ENCODE measurements at regions of chr2 and their contacts with region 1.

Region 1: GRCh38 chr2:170928824-170929685 is at the start of gene GORASP2:
- DNase-seq: peak; percentile 98 to 99 (median 99)
- H3K4me3 ChIP-seq: peak within 1 kb of the TSS; percentile 70 to 82
- H3K4me3 Mint-ChIP-seq: peak within 1 kb of the TSS; percentile 93 to 99 (median 96)
- H3K27ac ChIP-seq: peak within 1 kb of the TSS; percentile 89
- H3K27ac Mint-ChIP-seq: peak within 1 kb of the TSS; percentile 94 to 98 (median 97)
- H3K4me1 ChIP-seq: peaks cover 43% of the 10 kb centered on the region
- H3K4me1 Mint-ChIP-seq: peaks cover 24 to 48% (median 38%) of the 10 kb centered on the region in 4 donors
- H3K27me3 ChIP-seq: no peaks in the 10 kb centered on the region
- H3K27me3 Mint-ChIP-seq: no peaks in the 10 kb centered on the region
- total RNA-seq, gene GORASP2: 82.4 to 83.2 TPM

Region 2: GRCh38 chr2:169694113-169694903 is 1234.7 kb before region 1 on chr2 and contains the starts of genes CFAP210 and PHOSPHO2:
- CTCF ChIA-PET with region 1: no interaction called
- POLR2A ChIA-PET with region 1: no interaction called
- intact Hi-C with region 1: loop called (anchors 10 kb)
- DNase-seq: peak; percentile 98 to 99 (median 99)
- H3K4me3 ChIP-seq: peak within 1 kb of the TSS; percentile 37 to 69
- H3K4me3 Mint-ChIP-seq: peak within 1 kb of the TSS; percentile 88 to 96 (median 92)
- H3K27ac ChIP-seq: peak within 1 kb of the TSS; percentile 72
- H3K27ac Mint-ChIP-seq: peak within 1 kb of the TSS; percentile 93 to 100 (median 99)
- H3K4me1 ChIP-seq: peaks cover 15% of the 10 kb centered on the region
- H3K4me1 Mint-ChIP-seq: peaks cover 12 to 21% (median 16%) of the 10 kb centered on the region in 4 donors
- H3K27me3 ChIP-seq: no peaks in the 10 kb centered on the region
- H3K27me3 Mint-ChIP-seq: peaks cover 5 to 8% of the 10 kb centered on the region in 2 donors
- total RNA-seq, gene CFAP210: not detected
- total RNA-seq, gene PHOSPHO2: 7.2 to 7.4 TPM

Region 3: GRCh38 chr2:169790581-169790980 is 1138.5 kb before region 1 on chr2:
- CTCF ChIA-PET with region 1: no interaction called
- POLR2A ChIA-PET with region 1: no interaction called
- intact Hi-C with region 1: no loop called
- DNase-seq: no peak
- H3K4me3 ChIP-seq: no peak overlapping the region
- H3K4me3 Mint-ChIP-seq: no peak overlapping the region
- H3K27ac ChIP-seq: no peak overlapping the region
- H3K27ac Mint-ChIP-seq: no peak overlapping the region
- H3K4me1 ChIP-seq: no peaks in the 10 kb centered on the region
- H3K4me1 Mint-ChIP-seq: peaks cover 0 to 5% (median 5%) of the 10 kb centered on the region in 4 donors
- H3K27me3 ChIP-seq: peaks cover 13% of the 10 kb centered on the region
- H3K27me3 Mint-ChIP-seq: peaks cover 18 to 25% of the 10 kb centered on the region in 2 donors

Region 4: DNA sequence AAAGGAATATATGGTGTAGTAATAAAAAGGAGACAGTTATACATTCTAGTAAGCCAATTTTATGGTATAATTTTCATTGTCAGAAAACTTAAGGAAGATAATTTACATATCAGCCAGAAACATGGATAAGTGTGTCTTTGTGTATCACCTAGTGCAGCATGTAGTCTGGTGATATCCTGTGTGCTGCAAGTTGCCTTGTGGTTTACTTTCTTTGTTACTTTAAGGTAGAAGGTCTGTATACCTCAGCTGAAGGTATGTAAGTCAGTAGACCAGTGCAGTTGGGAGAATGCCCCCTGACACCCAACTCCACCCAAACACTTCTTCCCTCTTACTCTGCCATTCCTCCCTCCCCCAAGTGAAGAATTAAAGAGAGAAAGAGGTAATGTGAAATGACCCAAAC is 11.0 kb after region 1 on chr2:
- CTCF ChIA-PET with region 1: interaction called, 19 read pairs
- POLR2A ChIA-PET with region 1: interaction called, 7 read pairs
- intact Hi-C with region 1: no loop called
- DNase-seq: no peak
- H3K4me3 ChIP-seq: no peak overlapping the region
- H3K4me3 Mint-ChIP-seq: peak overlapping the region in 2 of 8 donors; percentile 6 to 55
- H3K27ac ChIP-seq: no peak overlapping the region
- H3K27ac Mint-ChIP-seq: peak overlapping the region in 3 of 7 donors; percentile 12 to 70 (median 33)
- H3K4me1 ChIP-seq: peaks cover 60% of the 10 kb centered on the region
- H3K4me1 Mint-ChIP-seq: peaks cover 53 to 87% (median 66%) of the 10 kb centered on the region in 4 donors
- H3K27me3 ChIP-seq: no peaks in the 10 kb centered on the region
- H3K27me3 Mint-ChIP-seq: no peaks in the 10 kb centered on the region

Region 5: DNA sequence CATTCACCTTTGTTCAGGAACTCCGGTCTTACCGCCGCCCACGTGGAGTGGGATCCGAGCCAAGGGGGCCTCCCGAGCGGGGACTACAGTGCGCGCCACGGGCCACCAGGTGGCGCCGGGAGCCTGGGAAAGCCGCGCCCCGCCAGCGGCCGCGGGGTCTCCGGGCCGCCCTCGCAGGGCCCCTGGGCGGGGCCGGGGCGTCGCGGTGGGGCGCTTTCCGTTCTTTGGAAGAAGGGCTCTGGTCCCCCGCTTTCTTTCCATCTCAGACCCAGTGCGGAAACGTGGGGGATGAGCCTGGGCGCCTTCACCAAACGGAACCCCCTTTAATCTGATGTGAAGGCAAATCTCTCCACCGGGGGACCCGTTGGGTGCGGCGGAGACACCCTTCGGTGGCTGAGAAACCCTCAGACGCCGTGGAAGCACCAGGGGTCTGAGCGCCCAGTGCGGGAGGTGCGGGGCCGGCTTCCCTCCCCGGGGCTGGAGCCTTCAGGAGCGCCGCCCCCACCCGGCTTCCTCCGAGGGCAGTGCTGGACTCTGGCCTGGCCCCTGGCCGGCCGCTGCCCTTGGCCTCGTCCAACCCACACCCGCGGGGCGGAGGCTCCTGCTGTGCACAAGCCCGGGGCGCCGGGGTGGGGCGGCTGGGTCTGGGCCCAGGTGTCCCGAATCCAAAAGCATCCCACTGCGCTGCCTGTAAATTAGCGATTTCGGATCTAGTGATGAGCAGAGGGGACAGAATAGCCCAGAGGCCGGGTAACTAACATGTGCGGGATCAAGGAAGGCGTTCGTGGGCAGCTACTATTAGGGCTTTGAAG is 44.6 kb after region 1 on chr2:
- CTCF ChIA-PET with region 1: interaction called, 20 read pairs
- POLR2A ChIA-PET with region 1: interaction called, 17 read pairs
- intact Hi-C with region 1: loop called (anchors 1 kb)
- DNase-seq: peak; percentile 87 to 91 (median 87)
- H3K4me3 ChIP-seq: peak overlapping the region; percentile 26 to 77
- H3K4me3 Mint-ChIP-seq: peak overlapping the region; percentile 81 to 88 (median 84)
- H3K27ac ChIP-seq: peak overlapping the region; percentile 52
- H3K27ac Mint-ChIP-seq: peak overlapping the region; percentile 25 to 90 (median 54)
- H3K4me1 ChIP-seq: peaks cover 14% of the 10 kb centered on the region
- H3K4me1 Mint-ChIP-seq: peaks cover 7 to 16% (median 10%) of the 10 kb centered on the region in 4 donors
- H3K27me3 ChIP-seq: no peaks in the 10 kb centered on the region
- H3K27me3 Mint-ChIP-seq: no peaks in the 10 kb centered on the region

Region 6: GRCh38 chr2:171416009-171416926 is 487.2 kb after region 1 on chr2:
- CTCF ChIA-PET with region 1: interaction called, 20 read pairs
- POLR2A ChIA-PET with region 1: interaction called, 7 read pairs
- intact Hi-C with region 1: loop called (anchors 1 kb)
- DNase-seq: peak; percentile 73 to 85 (median 78)
- H3K4me3 ChIP-seq: no peak overlapping the region
- H3K4me3 Mint-ChIP-seq: peak overlapping the region in 3 of 8 donors; percentile 5 to 41 (median 10)
- H3K27ac ChIP-seq: no peak overlapping the region
- H3K27ac Mint-ChIP-seq: peak overlapping the region; percentile 19 to 92 (median 54)
- H3K4me1 ChIP-seq: peaks cover 10% of the 10 kb centered on the region
- H3K4me1 Mint-ChIP-seq: peaks cover 10 to 18% (median 11%) of the 10 kb centered on the region in 4 donors
- H3K27me3 ChIP-seq: no peaks in the 10 kb centered on the region
- H3K27me3 Mint-ChIP-seq: no peaks in the 10 kb centered on the region

Region 7: GRCh38 chr2:171687287-171688128 is 758.5 kb after region 1 on chr2 and contains the start of gene DYNC1I2:
- CTCF ChIA-PET with region 1: interaction called, 6 read pairs
- POLR2A ChIA-PET with region 1: no interaction called
- intact Hi-C with region 1: loop called (anchors 2 kb)
- DNase-seq: peak; percentile 72 to 83 (median 79)
- H3K4me3 ChIP-seq: peak within 1 kb of the TSS; percentile 52 to 75
- H3K4me3 Mint-ChIP-seq: peak within 1 kb of the TSS; percentile 90 to 97 (median 94)
- H3K27ac ChIP-seq: peak within 1 kb of the TSS; percentile 50
- H3K27ac Mint-ChIP-seq: peak within 1 kb of the TSS; percentile 86 to 97 (median 94)
- H3K4me1 ChIP-seq: peaks cover 13% of the 10 kb centered on the region
- H3K4me1 Mint-ChIP-seq: peaks cover 20 to 31% (median 27%) of the 10 kb centered on the region in 4 donors
- H3K27me3 ChIP-seq: no peaks in the 10 kb centered on the region
- H3K27me3 Mint-ChIP-seq: no peaks in the 10 kb centered on the region
- total RNA-seq, gene DYNC1I2: 50.2 to 50.3 TPM

Measured in CD4-positive, alpha-beta memory T cell (primary cell).